ENCODE measurements at regions of chr3 and their contacts with region 1.

Region 1: DNA sequence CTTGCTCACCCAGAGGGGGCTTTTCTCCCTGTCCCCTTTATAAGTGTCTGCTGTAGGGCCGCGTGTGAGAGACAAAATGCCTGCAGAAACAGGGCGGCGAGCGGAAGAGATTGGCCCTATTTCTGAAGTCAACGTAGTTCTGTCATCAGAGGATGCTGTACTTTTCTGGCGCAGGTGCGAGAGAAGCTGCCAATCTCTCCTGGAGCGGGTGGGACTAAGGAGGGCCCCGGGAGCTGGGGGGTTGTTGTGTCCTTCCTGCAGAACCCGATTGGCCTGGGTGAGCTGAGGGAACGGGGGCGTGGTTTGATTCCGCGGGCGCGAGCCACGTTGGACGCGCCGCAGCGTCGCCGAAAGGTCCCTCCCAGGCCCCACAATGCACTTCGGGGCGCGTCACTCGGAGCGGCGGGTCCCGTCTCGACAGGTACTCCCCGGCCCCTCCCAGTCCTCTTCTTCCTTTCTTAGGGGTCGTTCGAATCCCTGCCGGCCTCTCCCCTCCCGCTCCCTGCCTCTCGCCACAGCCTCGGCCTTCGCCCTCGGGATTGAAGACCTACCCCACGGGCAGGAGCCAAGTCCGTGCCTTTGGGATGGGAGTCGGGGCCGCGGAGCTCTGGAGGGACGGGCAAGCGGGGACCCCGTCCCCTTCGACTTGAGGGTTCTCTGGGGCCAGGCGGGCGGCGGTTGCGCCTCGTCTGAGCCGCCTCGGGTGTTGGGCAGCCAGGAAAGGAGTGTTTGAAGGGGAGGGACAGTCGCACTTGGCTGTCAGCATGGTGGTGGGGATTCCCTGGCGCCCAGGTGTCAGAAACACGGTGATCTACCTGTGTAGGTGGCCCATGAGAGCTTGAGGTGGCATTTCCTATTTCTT is at the start of gene SEC22A:
- DNase-seq: peak; percentile 95 to 98 (median 98)
- H3K4me3 ChIP-seq: peak within 1 kb of the TSS; percentile 82 to 91
- H3K4me3 Mint-ChIP-seq: peak within 1 kb of the TSS; percentile 88 to 98 (median 90)
- H3K27ac ChIP-seq: peak within 1 kb of the TSS; percentile 98
- H3K27ac Mint-ChIP-seq: peak within 1 kb of the TSS; percentile 92 to 99 (median 98)
- H3K4me1 ChIP-seq: peaks cover 20% of the 10 kb centered on the region
- H3K4me1 Mint-ChIP-seq: peaks cover 21 to 38% (median 28%) of the 10 kb centered on the region in 4 donors
- H3K27me3 ChIP-seq: no peaks in the 10 kb centered on the region
- H3K27me3 Mint-ChIP-seq: peaks cover 0 to 4% of the 10 kb centered on the region in 2 donors
- total RNA-seq, gene SEC22A: 19.4 to 23.2 TPM

Region 2: DNA sequence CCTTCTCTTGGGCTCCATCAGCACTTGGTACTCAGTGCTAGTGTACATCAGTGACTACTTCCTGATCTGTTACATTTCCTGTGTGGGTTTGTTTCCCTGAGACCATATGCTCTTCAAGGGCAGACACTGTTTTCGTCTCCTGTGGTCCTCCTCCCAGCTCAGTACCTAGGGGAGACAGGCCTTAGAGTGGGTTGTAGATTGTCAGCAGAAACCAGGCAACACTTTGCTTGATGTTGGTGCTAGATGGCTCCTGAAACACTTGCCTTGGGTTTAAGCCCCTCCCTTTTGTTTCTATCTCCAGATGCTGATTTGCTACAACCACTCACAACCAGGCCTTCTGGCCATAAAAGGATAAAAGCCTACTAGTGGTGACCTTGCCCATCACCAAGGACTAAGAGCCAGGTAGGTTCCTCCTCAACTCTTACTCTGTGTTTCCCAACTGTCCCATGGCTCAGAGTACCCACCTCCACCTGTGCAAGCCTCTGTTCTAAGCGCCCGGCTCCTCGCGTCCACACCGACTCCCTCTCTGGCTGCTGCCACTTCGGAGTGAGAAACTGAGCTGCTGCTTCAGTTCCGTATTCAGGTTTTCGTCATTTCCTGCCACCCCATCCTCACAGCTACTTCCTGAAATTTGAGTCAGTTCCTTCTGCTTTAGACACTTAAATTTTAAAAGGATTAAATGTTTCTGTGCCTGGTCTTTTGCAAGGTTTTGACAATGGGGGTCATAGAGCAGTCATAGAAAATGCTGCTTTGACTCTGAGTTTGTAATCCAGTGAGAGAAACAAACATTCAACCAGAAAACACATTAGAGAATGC is 1541.2 kb before region 1 on chr3 and contains the start of gene HCLS1:
- CTCF ChIA-PET with region 1: no interaction called
- POLR2A ChIA-PET with region 1: no interaction called
- intact Hi-C with region 1: loop called (anchors 2 kb)
- DNase-seq: peak; percentile 80 to 86 (median 83)
- H3K4me3 ChIP-seq: peak within 1 kb of the TSS; percentile 58 to 76
- H3K4me3 Mint-ChIP-seq: peak within 1 kb of the TSS; percentile 91 to 99 (median 94)
- H3K27ac ChIP-seq: peak within 1 kb of the TSS; percentile 85
- H3K27ac Mint-ChIP-seq: peak within 1 kb of the TSS; percentile 95 to 100 (median 99)
- H3K4me1 ChIP-seq: peaks cover 42% of the 10 kb centered on the region
- H3K4me1 Mint-ChIP-seq: peaks cover 36 to 62% (median 50%) of the 10 kb centered on the region in 4 donors
- H3K27me3 ChIP-seq: no peaks in the 10 kb centered on the region
- H3K27me3 Mint-ChIP-seq: no peaks in the 10 kb centered on the region
- total RNA-seq, gene HCLS1: 336 TPM

Region 3: DNA sequence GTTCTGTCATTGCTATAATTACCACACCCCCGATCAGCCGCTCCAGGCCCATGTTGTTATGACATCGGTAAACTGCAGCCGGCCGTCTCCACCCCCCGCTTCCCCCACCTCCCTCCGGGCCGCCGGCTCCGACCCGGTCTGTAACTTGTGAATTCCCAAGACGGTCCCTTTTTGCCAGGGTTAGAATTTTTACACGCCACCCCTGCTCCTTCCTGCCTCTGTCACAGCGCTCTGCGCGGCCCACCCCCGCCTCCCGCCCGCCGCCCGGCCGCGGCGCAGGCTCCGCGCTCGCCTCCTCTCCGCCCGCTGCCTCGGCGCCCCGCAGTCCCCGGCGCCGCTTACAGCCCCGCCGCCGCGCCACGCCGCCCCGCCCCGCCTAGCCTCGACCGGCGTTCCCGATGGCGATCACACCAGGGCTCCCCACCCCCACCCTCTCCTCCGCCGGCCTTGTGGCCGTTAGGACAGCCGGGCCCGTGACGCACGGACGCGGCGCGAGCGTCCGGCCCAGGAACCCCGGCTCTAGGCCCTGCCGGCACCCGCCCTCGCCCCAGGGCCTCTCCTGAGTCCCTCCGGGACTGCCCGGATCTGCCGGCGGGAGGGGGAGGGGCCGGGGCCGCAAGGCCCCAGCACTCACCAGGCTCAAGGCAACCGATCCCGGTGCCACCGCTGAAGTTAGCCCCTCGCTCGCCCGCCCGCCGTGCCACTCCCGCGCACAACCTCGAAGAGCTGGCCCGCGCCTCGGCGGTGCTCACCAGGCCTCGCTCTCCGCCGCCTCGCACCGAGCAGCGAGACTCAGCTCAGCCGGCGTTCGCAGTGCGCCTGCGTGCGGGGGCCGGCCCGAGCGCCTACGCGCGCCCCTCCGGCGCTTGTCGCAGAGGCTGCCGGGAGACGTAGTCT is 687.4 kb before region 1 on chr3 and contains the start of gene KPNA1:
- CTCF ChIA-PET with region 1: no interaction called
- POLR2A ChIA-PET with region 1: no interaction called
- intact Hi-C with region 1: loop called (anchors 10 kb)
- DNase-seq: peak; percentile 86 to 92 (median 90)
- H3K4me3 ChIP-seq: peak within 1 kb of the TSS; percentile 58 to 71
- H3K4me3 Mint-ChIP-seq: peak within 1 kb of the TSS; percentile 90 to 95 (median 93)
- H3K27ac ChIP-seq: peak within 1 kb of the TSS; percentile 97
- H3K27ac Mint-ChIP-seq: peak within 1 kb of the TSS; percentile 91 to 98 (median 96)
- H3K4me1 ChIP-seq: peaks cover 30% of the 10 kb centered on the region
- H3K4me1 Mint-ChIP-seq: peaks cover 24 to 51% (median 36%) of the 10 kb centered on the region in 4 donors
- H3K27me3 ChIP-seq: no peaks in the 10 kb centered on the region
- H3K27me3 Mint-ChIP-seq: no peaks in the 10 kb centered on the region
- total RNA-seq, gene KPNA1: 67.4 to 71.5 TPM

Region 4: DNA sequence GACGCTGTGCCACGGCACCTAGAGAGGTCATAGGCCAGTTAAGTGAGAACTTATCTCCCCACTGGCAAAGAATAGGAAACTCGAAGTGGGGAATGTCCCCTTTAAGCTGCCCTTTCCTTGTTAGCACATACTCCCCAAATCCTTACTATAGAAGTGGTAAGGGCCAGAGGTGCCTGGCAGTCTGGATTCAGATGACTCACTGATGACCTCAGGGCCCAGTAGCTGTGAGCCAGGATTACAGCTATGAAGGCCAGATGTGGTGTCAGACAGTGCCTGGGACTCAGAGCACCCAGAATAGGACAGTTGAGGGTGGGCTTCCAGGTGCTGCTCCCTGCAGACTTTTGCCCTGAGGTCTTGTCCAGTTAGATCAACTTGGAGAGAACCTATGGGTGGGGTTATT is 97.2 kb before region 1 on chr3:
- CTCF ChIA-PET with region 1: no interaction called
- POLR2A ChIA-PET with region 1: no interaction called
- intact Hi-C with region 1: no loop called
- DNase-seq: no peak
- H3K4me3 ChIP-seq: no peak overlapping the region
- H3K4me3 Mint-ChIP-seq: no peak overlapping the region
- H3K27ac ChIP-seq: no peak overlapping the region
- H3K27ac Mint-ChIP-seq: no peak overlapping the region
- H3K4me1 ChIP-seq: no peaks in the 10 kb centered on the region
- H3K4me1 Mint-ChIP-seq: no peaks in the 10 kb centered on the region
- H3K27me3 ChIP-seq: no peaks in the 10 kb centered on the region
- H3K27me3 Mint-ChIP-seq: no peaks in the 10 kb centered on the region

Region 5: GRCh38 chr3:123180799-123181198 is 21.0 kb before region 1 on chr3:
- CTCF ChIA-PET with region 1: no interaction called
- POLR2A ChIA-PET with region 1: no interaction called
- intact Hi-C with region 1: no loop called
- DNase-seq: no peak
- H3K4me3 ChIP-seq: no peak overlapping the region
- H3K4me3 Mint-ChIP-seq: no peak overlapping the region
- H3K27ac ChIP-seq: no peak overlapping the region
- H3K27ac Mint-ChIP-seq: no peak overlapping the region
- H3K4me1 ChIP-seq: no peaks in the 10 kb centered on the region
- H3K4me1 Mint-ChIP-seq: no peaks in the 10 kb centered on the region
- H3K27me3 ChIP-seq: no peaks in the 10 kb centered on the region
- H3K27me3 Mint-ChIP-seq: peaks cover 0 to 3% of the 10 kb centered on the region in 2 donors

Region 6: DNA sequence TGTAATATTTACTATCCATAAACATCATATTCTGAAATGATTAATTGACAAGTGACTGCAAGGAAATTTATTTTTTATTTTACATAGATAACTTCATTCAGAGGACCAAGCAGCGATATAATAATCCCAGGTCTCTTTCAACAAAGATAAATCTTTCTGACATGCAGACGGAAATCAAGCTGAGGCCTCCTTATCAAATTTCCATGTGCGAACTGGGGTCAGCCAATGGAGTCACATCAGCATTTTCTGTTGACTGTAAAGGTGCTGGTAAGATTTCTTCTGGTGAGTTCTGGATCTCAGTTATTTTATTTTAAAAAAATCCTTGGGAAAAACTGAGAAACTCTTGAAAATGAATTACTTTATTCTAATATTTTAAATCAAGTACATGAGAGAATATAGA is 23.2 kb after region 1 on chr3:
- CTCF ChIA-PET with region 1: no interaction called
- POLR2A ChIA-PET with region 1: no interaction called
- intact Hi-C with region 1: no loop called
- DNase-seq: no peak
- H3K4me3 ChIP-seq: no peak overlapping the region
- H3K4me3 Mint-ChIP-seq: no peak overlapping the region
- H3K27ac ChIP-seq: no peak overlapping the region
- H3K27ac Mint-ChIP-seq: no peak overlapping the region
- H3K4me1 ChIP-seq: no peaks in the 10 kb centered on the region
- H3K4me1 Mint-ChIP-seq: peaks cover 2 to 11% (median 6%) of the 10 kb centered on the region in 4 donors
- H3K27me3 ChIP-seq: no peaks in the 10 kb centered on the region
- H3K27me3 Mint-ChIP-seq: no peaks in the 10 kb centered on the region

Measured in CD4-positive, alpha-beta memory T cell (primary cell).